ENCODE measurements at regions of chr1 and their contacts with region 1.

Region 1: DNA sequence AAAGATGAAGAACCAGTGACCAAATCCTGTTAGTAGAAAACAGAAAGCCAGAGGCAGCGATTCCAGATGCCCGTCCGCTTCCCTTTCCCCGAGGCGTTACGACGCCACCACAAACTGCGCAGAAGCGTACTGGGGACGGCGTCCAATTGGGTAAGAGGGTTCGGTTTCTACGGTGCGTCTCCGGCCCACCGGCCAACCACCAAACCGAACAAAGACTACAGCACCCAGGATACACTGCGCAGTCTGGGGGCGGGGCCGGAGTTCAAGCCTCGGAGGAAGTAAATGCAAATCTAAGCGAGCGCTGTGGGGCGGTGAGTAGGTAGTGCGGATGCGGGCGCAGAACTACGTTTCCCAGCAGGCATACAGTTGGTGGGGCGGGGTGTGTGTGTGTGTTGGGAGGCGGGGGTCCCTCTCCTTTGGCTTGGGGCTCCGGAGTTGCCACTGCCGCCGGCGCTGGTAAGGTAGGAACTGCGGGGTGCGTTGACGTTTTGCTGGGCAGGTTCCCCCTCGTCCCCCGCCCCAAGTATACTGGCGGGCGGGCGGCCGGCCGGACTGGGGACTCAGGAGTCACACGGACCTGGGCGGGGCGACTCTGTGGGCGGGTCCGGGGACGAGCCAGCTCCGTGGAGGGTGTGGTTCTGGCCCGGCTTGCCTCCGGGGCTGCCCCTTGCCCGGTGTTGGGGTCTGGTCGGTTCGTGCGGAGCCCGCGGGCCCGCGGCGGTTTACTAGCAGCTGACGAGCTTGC is at the starts of genes SWT1 and TRMT1L:
- DNase-seq: peak; percentile 99 to 100
- ATAC-seq: peak; percentile 94 to 96
- H3K4me3 ChIP-seq: peak within 1 kb of the TSS; percentile 75 to 99 (median 96)
- H3K27ac ChIP-seq: peak within 1 kb of the TSS; percentile 93 to 99 (median 98)
- H3K4me1 ChIP-seq: peaks cover 25 to 36% of the 10 kb centered on the region in 2 donors
- H3K27me3 ChIP-seq: no peaks in the 10 kb centered on the region
- CTCF ChIP-seq: no peak
- POLR2A ChIP-seq: peak; percentile 94 to 95
- total RNA-seq, gene SWT1: 3.4 to 6.2 (median 4.6) TPM
- total RNA-seq, gene TRMT1L: 24.9 to 42.8 (median 30.0) TPM

Region 2: GRCh38 chr1:183635606-183636333 is 1521.3 kb before region 1 on chr1 and contains the start of gene ARPC5:
- in situ Hi-C with region 1: no loop called
- intact Hi-C with region 1: loop called (anchors 5 kb)
- DNase-seq: peak; percentile 90
- ATAC-seq: peak; percentile 90 to 97
- H3K4me3 ChIP-seq: peak within 1 kb of the TSS; percentile 79 to 92 (median 88)
- H3K27ac ChIP-seq: peak within 1 kb of the TSS; percentile 82 to 89 (median 84)
- H3K4me1 ChIP-seq: peaks cover 29 to 35% of the 10 kb centered on the region in 2 donors
- H3K27me3 ChIP-seq: no peaks in the 10 kb centered on the region
- CTCF ChIP-seq: no peak
- POLR2A ChIP-seq: peak; percentile 76 to 81
- total RNA-seq, gene ARPC5: 10.8 to 14.6 (median 13.0) TPM

Region 3: DNA sequence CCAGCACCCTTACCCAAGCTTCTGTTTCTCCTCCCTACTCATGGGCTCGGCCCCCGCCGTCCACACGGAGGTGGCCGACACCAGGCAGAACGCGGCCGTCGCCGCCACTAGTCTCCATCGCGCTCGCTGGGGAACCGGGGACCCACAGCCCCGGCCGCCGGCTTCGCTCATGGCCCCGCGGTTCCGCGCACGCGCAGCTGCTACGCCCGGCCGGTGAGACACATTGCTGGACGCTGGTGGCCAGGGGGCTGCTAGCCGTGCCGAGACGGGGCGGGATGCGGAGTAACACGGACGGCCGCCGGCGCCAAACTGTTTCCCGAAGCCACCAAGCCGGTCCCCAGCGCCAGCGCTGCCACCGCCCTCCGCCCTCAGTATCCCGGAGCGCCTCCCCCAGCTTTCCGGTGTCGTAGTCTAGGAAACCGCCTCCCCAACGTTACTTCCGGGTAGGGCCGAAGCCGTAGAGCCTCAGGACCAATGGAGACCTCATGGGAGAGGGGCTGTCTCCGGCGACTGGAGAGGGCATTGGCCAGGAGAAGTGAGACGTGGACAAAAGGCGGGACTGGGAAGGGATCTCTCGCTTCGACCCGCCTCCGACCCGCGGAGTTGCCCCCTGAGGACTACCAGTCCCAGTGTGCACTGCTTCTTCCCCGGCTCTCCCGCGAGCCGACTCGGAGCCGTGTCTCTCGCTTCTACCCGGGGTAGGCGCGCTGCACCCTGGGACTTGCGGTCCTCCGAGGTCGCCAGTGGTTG is 402.4 kb before region 1 on chr1 and contains the start of gene EDEM3:
- in situ Hi-C with region 1: loop called (anchors 5 to 25 kb)
- intact Hi-C with region 1: loop called (anchors 2 kb)
- DNase-seq: peak; percentile 99 to 100
- ATAC-seq: peak; percentile 97
- H3K4me3 ChIP-seq: peak within 1 kb of the TSS; percentile 94 to 97 (median 96)
- H3K27ac ChIP-seq: peak within 1 kb of the TSS; percentile 93 to 99 (median 96)
- H3K4me1 ChIP-seq: peaks cover 16 to 17% of the 10 kb centered on the region in 2 donors
- H3K27me3 ChIP-seq: no peaks in the 10 kb centered on the region
- CTCF ChIP-seq: peak in 1 of 5 experiments; percentile 15
- POLR2A ChIP-seq: peak; percentile 98
- total RNA-seq, gene EDEM3: 18.1 to 51.1 (median 31.9) TPM

Region 4: GRCh38 chr1:184973272-184974055 is 183.6 kb before region 1 on chr1:
- in situ Hi-C with region 1: no loop called
- intact Hi-C with region 1: loop called (anchors 5 kb)
- DNase-seq: peak in 1 of 2 donors; percentile 37
- ATAC-seq: peak; percentile 60 to 79
- H3K4me3 ChIP-seq: peak overlapping the region; percentile 63 to 80 (median 65)
- H3K27ac ChIP-seq: peak overlapping the region; percentile 71 to 81 (median 75)
- H3K4me1 ChIP-seq: peaks cover 0 to 10% of the 10 kb centered on the region in 2 donors
- H3K27me3 ChIP-seq: no peaks in the 10 kb centered on the region
- CTCF ChIP-seq: no peak
- POLR2A ChIP-seq: no peak

Region 5: DNA sequence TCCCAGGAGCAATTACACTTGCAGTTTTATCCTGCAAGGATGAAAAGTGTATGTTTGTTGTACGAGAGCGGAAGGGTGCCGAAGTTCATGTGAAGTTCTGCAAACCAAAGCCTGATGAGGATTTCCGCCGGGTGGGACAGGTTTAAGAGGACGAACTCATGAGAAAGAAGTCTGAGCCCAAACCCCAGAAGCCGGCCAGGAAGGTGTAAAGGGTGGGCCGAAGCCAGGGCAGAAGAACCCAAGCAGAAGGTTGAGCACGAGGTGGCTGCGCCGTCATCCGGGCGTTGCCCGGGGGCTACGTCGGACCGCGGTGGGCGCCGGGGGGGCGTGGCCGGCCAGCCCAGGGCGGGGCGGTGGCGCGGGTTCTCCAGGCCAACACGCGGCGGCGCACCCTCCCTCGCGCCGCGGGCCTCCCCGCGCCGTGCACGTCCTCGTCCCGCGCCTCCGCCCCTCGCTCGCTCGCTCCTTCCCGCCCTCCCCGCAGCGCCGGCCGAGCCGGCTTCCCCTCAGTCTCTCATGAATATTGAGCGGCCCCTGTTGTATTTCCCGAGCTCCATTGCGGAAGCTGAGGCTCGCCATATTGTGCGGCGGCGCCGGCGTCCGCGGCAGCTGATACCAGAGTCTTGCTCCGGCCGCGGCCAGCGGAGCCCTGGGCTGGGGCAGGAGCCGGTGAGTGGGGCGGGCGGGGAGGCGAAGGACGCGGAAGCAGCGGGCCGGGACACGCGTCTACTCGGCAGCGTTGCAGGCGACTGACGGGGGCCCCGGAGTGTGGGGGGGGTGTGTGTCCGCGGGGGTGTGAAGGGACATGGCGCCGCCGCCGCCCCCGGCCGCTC is 111.8 kb before region 1 on chr1 and contains the start of gene RNF2:
- in situ Hi-C with region 1: no loop called
- intact Hi-C with region 1: loop called (anchors 2 kb)
- DNase-seq: peak; percentile 45 to 67
- ATAC-seq: peak; percentile 79 to 85
- H3K4me3 ChIP-seq: peak within 1 kb of the TSS; percentile 87 to 97 (median 90)
- H3K27ac ChIP-seq: peak within 1 kb of the TSS; percentile 84 to 94 (median 92)
- H3K4me1 ChIP-seq: peaks cover 22 to 25% of the 10 kb centered on the region in 2 donors
- H3K27me3 ChIP-seq: no peaks in the 10 kb centered on the region
- CTCF ChIP-seq: no peak
- POLR2A ChIP-seq: peak; percentile 42 to 57
- total RNA-seq, gene RNF2: 5.4 to 11.0 (median 7.3) TPM

Region 6: DNA sequence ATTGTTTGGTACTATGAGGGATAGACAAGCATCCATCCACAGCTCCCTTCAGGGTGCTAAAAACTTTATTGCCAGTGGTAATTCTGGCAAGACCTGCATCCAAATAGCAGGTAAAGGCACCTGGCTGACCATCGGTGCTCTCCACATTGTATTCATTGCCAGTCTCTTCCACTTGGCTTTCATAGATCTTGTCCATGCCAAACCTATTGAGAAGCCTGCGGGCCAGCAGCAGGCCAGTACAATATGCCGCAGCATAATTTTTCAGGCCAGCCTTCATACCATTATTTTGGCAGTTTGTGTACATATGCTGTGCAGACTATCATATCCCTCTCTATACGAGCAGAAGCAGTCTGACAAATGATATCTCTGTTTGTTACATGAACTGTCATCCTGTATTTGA is 70.1 kb after region 1 on chr1:
- in situ Hi-C with region 1: no loop called
- intact Hi-C with region 1: no loop called
- DNase-seq: no peak
- ATAC-seq: no peak
- H3K4me3 ChIP-seq: no peak overlapping the region
- H3K27ac ChIP-seq: no peak overlapping the region
- H3K4me1 ChIP-seq: no peaks in the 10 kb centered on the region
- H3K27me3 ChIP-seq: no peaks in the 10 kb centered on the region
- CTCF ChIP-seq: no peak
- POLR2A ChIP-seq: no peak

Region 7: GRCh38 chr1:185317034-185317885 is 160.2 kb after region 1 on chr1 and contains the start of gene IVNS1ABP:
- in situ Hi-C with region 1: loop called in 1 of 4 experiments (anchors 10 kb)
- intact Hi-C with region 1: loop called (anchors 1 kb)
- DNase-seq: peak; percentile 93 to 95
- ATAC-seq: peak; percentile 90 to 91
- H3K4me3 ChIP-seq: peak within 1 kb of the TSS; percentile 75 to 95 (median 82)
- H3K27ac ChIP-seq: peak within 1 kb of the TSS; percentile 94 to 99 (median 98)
- H3K4me1 ChIP-seq: peaks cover 25 to 46% of the 10 kb centered on the region in 2 donors
- H3K27me3 ChIP-seq: no peaks in the 10 kb centered on the region
- CTCF ChIP-seq: peak in 2 of 5 experiments; percentile 6 to 37
- POLR2A ChIP-seq: peak; percentile 95 to 98
- total RNA-seq, gene IVNS1ABP: 18.3 to 38.1 (median 32.3) TPM

Region 8: DNA sequence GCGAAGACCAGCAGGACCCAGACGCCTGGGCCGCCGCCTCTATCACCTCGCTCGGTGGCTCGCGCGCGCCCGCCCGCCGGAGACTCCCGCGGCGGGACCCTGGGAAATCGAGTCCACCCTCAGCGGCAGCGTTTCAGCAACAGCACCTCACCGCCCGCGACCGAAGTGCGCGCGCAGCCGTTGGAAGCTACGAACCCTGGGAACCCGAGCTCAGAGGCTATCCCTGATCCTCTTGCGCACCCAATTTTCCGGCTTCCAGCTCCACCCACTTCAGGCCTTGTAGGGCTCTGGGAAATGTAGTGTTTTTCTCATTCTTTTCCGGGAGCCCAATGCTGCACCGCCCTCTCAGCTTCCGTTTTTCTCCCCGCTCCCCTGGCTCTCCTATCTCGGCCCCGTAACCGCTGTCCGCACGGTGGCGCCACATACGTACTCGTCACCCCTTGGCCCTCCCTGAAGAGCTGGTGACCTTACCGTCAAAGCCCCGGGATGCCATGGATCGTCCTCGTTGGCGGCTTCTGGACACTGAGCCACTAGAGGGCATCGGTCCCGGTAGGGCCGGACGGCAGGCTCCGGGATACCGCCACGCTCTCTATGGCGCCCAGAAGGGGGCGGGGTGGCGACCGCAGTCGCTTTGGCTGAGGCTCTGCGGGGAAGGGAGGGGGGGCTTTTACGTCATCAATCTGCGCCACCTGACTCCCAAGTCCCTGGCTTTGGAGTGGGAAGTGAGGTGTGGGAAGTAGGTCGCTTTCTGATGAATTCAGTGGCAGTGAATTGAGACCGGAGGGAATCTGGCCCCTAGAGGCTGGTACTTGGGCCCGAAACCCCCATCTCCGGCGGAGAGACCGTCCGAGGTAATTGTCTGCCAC is 1218.3 kb after region 1 on chr1 and contains the starts of genes ODR4 and TPR:
- in situ Hi-C with region 1: loop called in 1 of 4 experiments (anchors 10 kb)
- intact Hi-C with region 1: loop called (anchors 1 kb)
- DNase-seq: peak; percentile 95 to 98
- ATAC-seq: peak; percentile 95 to 96
- H3K4me3 ChIP-seq: peak within 1 kb of the TSS; percentile 87 to 97 (median 89)
- H3K27ac ChIP-seq: peak within 1 kb of the TSS; percentile 97 to 98 (median 97)
- H3K4me1 ChIP-seq: peaks cover 24 to 27% of the 10 kb centered on the region in 2 donors
- H3K27me3 ChIP-seq: no peaks in the 10 kb centered on the region
- CTCF ChIP-seq: peak; percentile 79 to 94 (median 92)
- POLR2A ChIP-seq: peak; percentile 79 to 86
- total RNA-seq, gene ODR4: 11.3 to 16.8 (median 11.9) TPM
- total RNA-seq, gene TPR: 56.6 to 84.7 (median 62.9) TPM